CD4-positive, alpha-beta T cell (primary cell): ENCODE measurements at regions of chr9 and their contacts with region 1.

Region 1: DNA sequence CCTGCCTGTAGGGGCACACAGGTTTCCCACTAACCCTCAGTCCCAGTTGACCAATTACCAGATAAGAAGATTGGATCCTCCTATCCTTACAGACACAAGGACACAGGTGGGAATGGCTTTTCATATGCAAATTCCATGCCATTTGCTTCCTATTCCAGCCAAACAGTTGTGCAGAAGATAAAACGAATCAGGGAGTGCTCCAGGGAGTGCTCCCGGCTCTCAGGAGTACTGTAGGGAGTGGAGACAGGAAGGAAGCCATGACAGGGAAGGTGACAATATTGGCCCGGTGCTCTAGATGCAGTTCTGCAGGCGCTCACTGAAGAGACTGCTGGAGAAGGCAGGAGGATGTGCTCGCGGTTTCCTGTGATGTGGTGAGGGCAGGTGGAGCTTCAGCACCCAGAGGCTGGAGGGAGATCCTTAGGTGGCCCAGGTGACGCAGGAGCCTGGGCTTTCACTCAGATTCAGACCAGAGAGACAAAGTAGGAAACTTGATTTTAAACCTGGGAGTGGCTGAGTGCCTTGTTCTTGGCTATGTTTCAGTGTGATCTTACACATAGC is 260.0 kb downstream of the AUH start:
- DNase-seq: peak; percentile 61 to 93 (median 68)
- ATAC-seq: peak; percentile 89
- H3K4me3 ChIP-seq: no peak overlapping the region
- H3K4me3 Mint-ChIP-seq: peak overlapping the region; percentile 64
- H3K27ac ChIP-seq: no peak overlapping the region
- H3K27ac Mint-ChIP-seq: peak overlapping the region; percentile 50
- H3K4me1 ChIP-seq: peaks cover 36% of the 10 kb centered on the region
- H3K4me1 Mint-ChIP-seq: peaks cover 39% of the 10 kb centered on the region
- H3K27me3 ChIP-seq: peaks cover 0 to 4% of the 10 kb centered on the region in 2 experiments
- H3K27me3 Mint-ChIP-seq: peaks cover 22% of the 10 kb centered on the region
- CTCF ChIP-seq: no peak

Region 2: GRCh38 chr9:91047993-91048607 is 53.6 kb before region 1 on chr9:
- CTCF ChIA-PET with region 1: interaction called, 3 read pairs
- POLR2A ChIA-PET with region 1: no interaction called
- intact Hi-C with region 1: loop called in 1 of 2 experiments (anchors 5 kb)
- DNase-seq: no peak
- ATAC-seq: peak; percentile 59
- H3K4me3 ChIP-seq: no peak overlapping the region
- H3K4me3 Mint-ChIP-seq: peak overlapping the region; percentile 40
- H3K27ac ChIP-seq: no peak overlapping the region
- H3K27ac Mint-ChIP-seq: no peak overlapping the region
- H3K4me1 ChIP-seq: peaks cover 14% of the 10 kb centered on the region
- H3K4me1 Mint-ChIP-seq: peaks cover 19% of the 10 kb centered on the region
- H3K27me3 ChIP-seq: peaks cover 23 to 26% of the 10 kb centered on the region in 2 experiments
- H3K27me3 Mint-ChIP-seq: peaks cover 42% of the 10 kb centered on the region
- CTCF ChIP-seq: no peak

Region 3: GRCh38 chr9:91150998-91151717 is 49.5 kb after region 1 on chr9:
- CTCF ChIA-PET with region 1: no interaction called
- POLR2A ChIA-PET with region 1: interaction called, 3 read pairs
- intact Hi-C with region 1: loop called (anchors 1 to 5 kb)
- DNase-seq: peak in 3 of 14 experiments; percentile 80 to 88 (median 84)
- ATAC-seq: peak; percentile 86
- H3K4me3 ChIP-seq: no peak overlapping the region
- H3K4me3 Mint-ChIP-seq: peak overlapping the region; percentile 7
- H3K27ac ChIP-seq: no peak overlapping the region
- H3K27ac Mint-ChIP-seq: peak overlapping the region; percentile 43
- H3K4me1 ChIP-seq: peaks cover 24% of the 10 kb centered on the region
- H3K4me1 Mint-ChIP-seq: peaks cover 51% of the 10 kb centered on the region
- H3K27me3 ChIP-seq: no peaks in the 10 kb centered on the region
- H3K27me3 Mint-ChIP-seq: no peaks in the 10 kb centered on the region
- CTCF ChIP-seq: no peak

Region 4: DNA sequence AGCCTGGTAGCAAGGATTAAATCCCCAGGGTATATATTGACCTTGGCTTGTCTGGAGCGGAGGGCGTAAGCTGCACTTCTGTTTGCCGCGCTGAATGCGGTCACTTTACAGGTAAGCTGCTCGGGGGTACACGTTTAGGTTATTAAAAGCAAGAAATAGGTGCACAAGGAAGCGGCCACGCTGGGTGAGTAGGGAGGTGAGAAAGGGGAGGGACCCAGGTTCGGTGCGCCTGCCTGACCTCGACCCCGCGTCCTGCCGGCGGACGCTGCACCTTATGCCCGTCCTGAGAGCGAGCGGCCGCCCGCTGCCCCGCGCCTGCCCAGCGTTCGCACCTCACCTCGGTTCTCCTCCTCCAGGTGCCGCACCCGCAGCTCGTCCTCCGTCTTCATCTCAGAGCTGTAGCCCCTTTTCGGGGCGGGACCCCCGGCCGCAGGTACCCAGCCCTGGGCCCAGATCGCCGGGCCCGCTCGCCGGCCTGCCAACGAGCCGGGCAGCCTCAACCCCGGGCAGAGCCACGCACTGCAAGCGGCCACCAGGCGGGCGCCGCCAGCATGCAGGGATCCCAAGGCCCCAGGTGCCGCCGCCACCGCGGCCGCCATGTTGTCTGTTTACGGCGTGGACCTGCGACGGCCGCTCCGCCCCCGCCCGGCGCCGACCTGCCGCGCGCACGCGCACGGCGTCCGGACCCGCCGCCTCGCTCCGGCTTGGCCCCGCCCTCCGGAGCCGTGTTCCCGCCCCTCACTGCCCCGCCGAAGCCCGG is 259.8 kb after region 1 on chr9 and contains the start of gene AUH:
- CTCF ChIA-PET with region 1: no interaction called
- POLR2A ChIA-PET with region 1: no interaction called
- intact Hi-C with region 1: loop called in 1 of 2 experiments (anchors 5 kb)
- DNase-seq: peak; percentile 73 to 95 (median 82)
- ATAC-seq: peak; percentile 96
- H3K4me3 ChIP-seq: peak within 1 kb of the TSS; percentile 67
- H3K4me3 Mint-ChIP-seq: peak within 1 kb of the TSS; percentile 99
- H3K27ac ChIP-seq: peak within 1 kb of the TSS in 1 of 2 donors; percentile 58
- H3K27ac Mint-ChIP-seq: peak within 1 kb of the TSS; percentile 91
- H3K4me1 ChIP-seq: peaks cover 27% of the 10 kb centered on the region
- H3K4me1 Mint-ChIP-seq: peaks cover 51% of the 10 kb centered on the region
- H3K27me3 ChIP-seq: no peaks in the 10 kb centered on the region
- H3K27me3 Mint-ChIP-seq: no peaks in the 10 kb centered on the region
- CTCF ChIP-seq: no peak
- total RNA-seq, gene AUH: 16.2 to 17.4 TPM